Transverse colon (tissue), 4 donors: ENCODE measurements at regions of chr2 and their contacts with region 1.

Region 1: DNA sequence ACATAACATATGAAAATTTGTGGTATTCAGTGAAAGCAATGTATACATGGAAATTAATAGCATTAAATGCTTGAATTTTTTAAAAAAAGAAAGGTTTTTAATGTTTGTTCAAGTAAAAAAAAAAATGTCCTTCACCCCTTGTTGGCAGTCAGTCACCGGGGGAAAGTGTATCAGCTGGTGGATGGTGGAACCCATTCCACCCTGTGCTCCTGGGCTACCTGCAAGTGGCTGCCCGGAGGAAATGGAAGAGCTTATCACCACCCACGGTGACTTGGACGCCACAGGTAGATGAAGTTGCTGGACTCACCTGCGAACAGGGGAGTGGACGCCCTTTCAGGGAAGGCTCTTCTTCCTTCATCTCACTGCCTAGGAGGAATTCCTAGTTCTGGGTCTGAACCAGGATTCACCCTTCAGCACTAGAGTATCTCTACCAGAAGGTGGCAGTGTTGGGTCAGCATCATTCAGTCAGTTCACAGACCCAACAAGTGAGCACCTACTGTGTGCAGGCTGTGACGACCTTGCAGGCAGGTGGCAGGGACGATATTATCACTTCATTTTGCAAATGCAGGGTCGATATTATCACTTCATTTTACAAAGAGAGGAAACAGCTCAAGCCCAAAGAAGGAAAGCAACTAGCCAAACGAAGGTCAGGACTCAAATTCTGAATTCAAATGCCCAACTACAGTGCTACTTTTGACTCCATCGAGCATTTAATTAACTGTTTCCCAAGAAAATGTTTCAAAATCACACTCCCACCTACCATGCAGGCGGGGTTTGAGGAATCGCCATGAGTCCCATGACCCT is 35.8 kb downstream of the CIB4 start:
- DNase-seq: no peak
- H3K4me3 ChIP-seq: no peak overlapping the region
- H3K27ac ChIP-seq: no peak overlapping the region
- H3K4me1 ChIP-seq: peaks cover 0 to 16% (median 0%) of the 10 kb centered on the region in 4 donors
- H3K27me3 ChIP-seq: peaks cover 7% of the 10 kb centered on the region
- CTCF ChIP-seq: peak; percentile 78 to 85 (median 82)
- EP300 ChIP-seq: no peak
- POLR2A ChIP-seq: no peak

Region 2: GRCh38 chr2:26018176-26018716 is 587.2 kb before region 1 on chr2:
- in situ Hi-C with region 1: no loop called
- intact Hi-C with region 1: no loop called
- DNase-seq: peak; percentile 83
- H3K4me3 ChIP-seq: no peak overlapping the region
- H3K27ac ChIP-seq: peak overlapping the region; percentile 52 to 80 (median 72)
- H3K4me1 ChIP-seq: peaks cover 0 to 18% (median 15%) of the 10 kb centered on the region in 4 donors
- H3K27me3 ChIP-seq: no peaks in the 10 kb centered on the region
- CTCF ChIP-seq: no peak
- EP300 ChIP-seq: no peak
- POLR2A ChIP-seq: no peak

Region 3: DNA sequence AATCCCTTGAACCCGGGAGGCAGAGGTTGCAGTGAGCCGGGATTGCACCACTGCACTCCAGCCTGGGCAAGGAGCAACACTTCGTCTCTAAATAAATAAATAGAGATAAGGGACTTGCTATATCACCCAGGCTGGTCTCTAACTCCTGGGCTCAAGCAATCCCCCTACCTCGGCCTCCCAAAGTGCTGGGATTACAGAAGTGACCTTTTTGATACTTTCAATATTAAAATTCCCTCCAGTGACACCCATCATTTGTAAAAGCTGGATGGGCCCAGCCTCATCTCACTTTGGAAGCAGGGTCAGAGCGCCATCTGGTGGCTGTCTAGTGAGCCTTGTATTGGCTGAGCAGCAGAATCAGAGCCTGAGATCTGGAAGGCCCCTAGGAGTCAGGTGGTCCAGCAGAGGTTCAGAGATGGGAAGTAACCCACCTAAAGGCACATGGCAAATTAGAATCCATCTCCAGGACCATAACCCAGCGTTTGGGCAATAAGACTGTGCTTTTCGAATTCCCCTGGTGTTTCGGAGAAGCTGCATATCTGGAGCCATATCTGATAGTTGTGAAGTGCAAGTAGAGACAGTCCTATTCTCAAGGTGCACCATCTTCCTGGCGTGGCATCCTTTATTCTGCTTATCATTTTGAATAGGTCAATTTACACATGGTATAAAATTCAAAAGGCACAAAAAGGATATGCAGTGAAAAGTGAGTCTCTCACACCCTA is 140.4 kb after region 1 on chr2:
- in situ Hi-C with region 1: loop called (anchors 5 to 25 kb)
- intact Hi-C with region 1: loop called (anchors 2 kb)
- DNase-seq: peak; percentile 85
- H3K4me3 ChIP-seq: no peak overlapping the region
- H3K27ac ChIP-seq: no peak overlapping the region
- H3K4me1 ChIP-seq: peaks cover 0 to 9% (median 0%) of the 10 kb centered on the region in 4 donors
- H3K27me3 ChIP-seq: no peaks in the 10 kb centered on the region
- CTCF ChIP-seq: peak; percentile 86 to 92 (median 89)
- EP300 ChIP-seq: no peak
- POLR2A ChIP-seq: no peak

Region 4: GRCh38 chr2:26757873-26758789 is 152.7 kb after region 1 on chr2:
- in situ Hi-C with region 1: loop called in 1 of 4 experiments (anchors 5 kb)
- intact Hi-C with region 1: no loop called
- DNase-seq: no peak
- H3K4me3 ChIP-seq: no peak overlapping the region
- H3K27ac ChIP-seq: no peak overlapping the region
- H3K4me1 ChIP-seq: peaks cover 0 to 9% (median 3%) of the 10 kb centered on the region in 4 donors
- H3K27me3 ChIP-seq: no peaks in the 10 kb centered on the region
- CTCF ChIP-seq: no peak
- EP300 ChIP-seq: no peak
- POLR2A ChIP-seq: no peak